HepG2 (cell line): ENCODE measurements at regions of chr15 and their contacts with region 1.

Region 1: DNA sequence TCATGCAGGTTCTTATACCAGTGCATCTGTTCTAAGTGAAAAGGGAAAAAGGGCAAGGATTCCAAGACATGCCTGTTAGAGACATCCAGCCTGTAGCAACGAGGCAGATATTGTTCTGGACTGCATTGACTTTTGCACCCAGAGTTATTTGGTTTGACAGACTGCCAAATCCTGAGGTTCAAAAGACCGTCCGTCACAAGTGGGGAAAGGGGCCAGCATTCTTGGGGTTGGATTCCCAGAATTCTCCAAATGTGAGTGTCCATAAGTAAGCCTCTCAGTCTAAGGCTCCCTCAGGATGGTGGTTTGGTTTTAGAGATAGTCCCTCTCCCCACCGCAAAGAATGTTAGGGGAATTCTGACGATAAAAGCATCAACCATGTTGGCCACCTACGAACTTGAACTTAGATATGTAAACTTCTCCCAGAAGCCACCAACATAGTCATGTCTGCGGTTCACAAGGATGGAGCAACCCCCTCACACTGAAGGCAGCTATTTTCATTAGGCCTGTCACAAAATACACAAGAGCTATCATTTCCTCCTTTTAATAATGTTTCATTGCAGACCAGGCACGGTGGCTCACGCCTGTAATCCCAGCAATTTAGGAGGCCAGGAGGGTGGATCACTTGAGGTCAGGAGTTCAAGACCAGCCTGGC is 13.6 kb upstream of the LACTB start:
- DNase-seq: peak; percentile 98
- ATAC-seq: peak; percentile 94
- H3K4me3 ChIP-seq: peak overlapping the region in 1 of 3 experiments; percentile 11; a peak in 1 of 6 replicates
- H3K27ac ChIP-seq: peak overlapping the region; percentile 71
- H3K4me1 ChIP-seq: peaks cover 64% of the 10 kb centered on the region
- H3K27me3 ChIP-seq: no peaks in the 10 kb centered on the region
- CTCF ChIP-seq: no peak
- EP300 ChIP-seq: peak; percentile 77 to 94; a peak in 3 of 4 replicates
- POLR2A ChIP-seq: no peak
- RAD21 ChIP-seq: 0 out of 2 replicates have a peak, but pooled peaks have one; percentile 30

Region 2: GRCh38 chr15:63122002-63122893 is 14.2 kb after region 1 on chr15:
- CTCF ChIA-PET with region 1: no interaction called
- POLR2A ChIA-PET with region 1: interaction called, 20 read pairs
- in situ Hi-C with region 1: no loop called
- intact Hi-C with region 1: loop called (anchors 1 kb)
- DNase-seq: peak; percentile 73
- ATAC-seq: peak; percentile 96
- H3K4me3 ChIP-seq: peak overlapping the region; percentile 86 to 94 (median 94)
- H3K27ac ChIP-seq: peak overlapping the region; percentile 85
- H3K4me1 ChIP-seq: peaks cover 32% of the 10 kb centered on the region
- H3K27me3 ChIP-seq: no peaks in the 10 kb centered on the region
- CTCF ChIP-seq: peak; percentile 67
- EP300 ChIP-seq: no peak
- POLR2A ChIP-seq: peak; percentile 19 to 49; a peak in 3 of 4 replicates
- RAD21 ChIP-seq: no peak

Region 3: DNA sequence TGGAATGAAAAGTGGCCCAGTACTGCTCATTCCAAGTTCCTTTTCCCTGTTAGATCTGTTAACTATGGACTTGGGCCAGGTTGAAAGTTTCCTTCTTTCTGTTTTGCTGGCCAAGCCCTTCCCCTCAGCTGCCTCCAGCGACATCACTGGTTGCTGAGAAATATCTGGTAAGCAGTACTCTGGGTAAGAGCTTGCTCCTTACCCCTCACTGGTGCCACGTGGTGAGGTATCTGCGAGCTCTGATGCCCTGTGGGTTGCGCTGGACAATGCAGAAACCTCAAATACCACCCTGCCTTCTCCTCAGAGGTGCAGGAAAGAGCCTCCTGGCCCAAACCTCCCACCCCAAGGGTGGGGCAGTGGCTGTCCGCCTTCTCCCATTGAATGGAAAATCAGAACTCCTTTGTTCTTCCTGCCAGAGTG is 126.4 kb after region 1 on chr15:
- CTCF ChIA-PET with region 1: no interaction called
- POLR2A ChIA-PET with region 1: no interaction called
- in situ Hi-C with region 1: no loop called
- intact Hi-C with region 1: no loop called
- DNase-seq: no peak
- ATAC-seq: no peak
- H3K4me3 ChIP-seq: no peak overlapping the region
- H3K27ac ChIP-seq: peak overlapping the region; percentile 51
- H3K4me1 ChIP-seq: peaks cover 23% of the 10 kb centered on the region
- H3K27me3 ChIP-seq: no peaks in the 10 kb centered on the region
- CTCF ChIP-seq: no peak
- EP300 ChIP-seq: no peak
- POLR2A ChIP-seq: no peak
- RAD21 ChIP-seq: no peak